Testis (tissue), 5 donors: ENCODE measurements at regions of chr1 and their contacts with region 1.

Region 1: GRCh38 chr1:62508187-62508758 is 71.4 kb downstream of the USP1 start:
- DNase-seq: peak; percentile 42
- H3K4me3 ChIP-seq: no peak overlapping the region
- H3K27ac ChIP-seq: no peak overlapping the region
- H3K4me1 ChIP-seq: no peaks in the 10 kb centered on the region
- H3K27me3 ChIP-seq: no peaks in the 10 kb centered on the region
- CTCF ChIP-seq: peak in 2 of 3 experiments; percentile 27 to 52
- POLR2A ChIP-seq: no peak

Region 2: GRCh38 chr1:62746085-62746808 is 238.0 kb after region 1 on chr1:
- intact Hi-C with region 1: loop called (anchors 10 kb)
- DNase-seq: no peak
- H3K4me3 ChIP-seq: no peak overlapping the region
- H3K27ac ChIP-seq: no peak overlapping the region
- H3K4me1 ChIP-seq: peaks cover 5% of the 10 kb centered on the region
- H3K27me3 ChIP-seq: no peaks in the 10 kb centered on the region
- CTCF ChIP-seq: peak; percentile 36 to 42 (median 39)
- POLR2A ChIP-seq: no peak